Breast epithelium (tissue), 4 donors: ENCODE measurements at regions of chr12 and their contacts with region 1.

Region 1: DNA sequence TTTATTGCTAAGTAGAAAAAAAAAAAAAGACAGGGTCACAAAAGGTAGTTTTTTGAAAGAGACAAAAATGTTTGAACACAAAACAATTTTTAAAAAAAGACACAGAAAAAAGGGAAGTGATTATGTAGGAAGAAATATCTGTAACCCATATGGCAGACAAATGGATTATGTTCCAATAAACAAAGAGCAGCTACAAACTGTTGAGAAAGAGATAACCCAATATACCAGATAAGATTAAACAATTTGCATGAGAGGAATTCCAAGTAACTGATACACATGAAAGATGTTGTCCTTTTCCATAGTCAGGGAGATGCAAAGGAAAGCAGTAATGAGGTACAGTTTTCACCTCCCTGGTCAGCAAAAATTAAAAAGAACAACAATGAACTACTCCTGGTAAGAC is 44.9 kb downstream of the PTPRR start:
- DNase-seq: no peak
- H3K4me3 ChIP-seq: no peak overlapping the region
- H3K27ac ChIP-seq: no peak overlapping the region
- H3K4me1 ChIP-seq: no peaks in the 10 kb centered on the region
- H3K27me3 ChIP-seq: no peaks in the 10 kb centered on the region
- CTCF ChIP-seq: no peak
- POLR2A ChIP-seq: no peak

Region 2: DNA sequence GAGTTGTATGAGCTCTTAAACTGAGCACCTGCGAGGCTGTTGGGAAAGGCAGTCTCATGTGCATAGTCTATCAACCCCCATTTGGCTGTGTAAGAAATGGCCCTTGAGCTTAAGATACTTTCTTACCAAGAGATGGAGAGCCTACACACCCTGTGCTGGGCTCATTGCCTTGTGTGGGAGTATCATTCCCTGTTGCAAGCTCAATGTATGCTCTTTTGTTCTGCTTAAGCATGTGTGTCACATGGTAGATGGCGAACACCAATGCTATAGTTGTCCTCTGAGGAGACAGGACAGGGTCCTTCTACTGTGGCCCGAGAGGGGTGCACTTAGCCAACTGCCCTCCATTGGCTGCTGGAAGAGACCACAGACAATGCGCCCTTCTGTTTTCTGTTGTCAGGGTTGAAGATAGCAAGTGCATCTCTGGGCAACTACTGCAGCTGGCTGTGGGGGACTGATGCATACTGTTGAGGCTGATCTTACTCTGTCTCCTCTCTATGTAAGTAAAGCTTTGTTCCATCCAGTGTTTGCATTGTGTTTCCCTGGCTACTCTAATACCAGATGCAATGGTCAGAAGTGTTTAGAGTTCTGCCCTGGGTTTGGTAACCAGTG is 317.9 kb before region 1 on chr12:
- intact Hi-C with region 1: no loop called
- DNase-seq: no peak
- H3K4me3 ChIP-seq: no peak overlapping the region
- H3K27ac ChIP-seq: no peak overlapping the region
- H3K4me1 ChIP-seq: no peaks in the 10 kb centered on the region
- H3K27me3 ChIP-seq: no peaks in the 10 kb centered on the region
- CTCF ChIP-seq: no peak
- POLR2A ChIP-seq: no peak

Region 3: DNA sequence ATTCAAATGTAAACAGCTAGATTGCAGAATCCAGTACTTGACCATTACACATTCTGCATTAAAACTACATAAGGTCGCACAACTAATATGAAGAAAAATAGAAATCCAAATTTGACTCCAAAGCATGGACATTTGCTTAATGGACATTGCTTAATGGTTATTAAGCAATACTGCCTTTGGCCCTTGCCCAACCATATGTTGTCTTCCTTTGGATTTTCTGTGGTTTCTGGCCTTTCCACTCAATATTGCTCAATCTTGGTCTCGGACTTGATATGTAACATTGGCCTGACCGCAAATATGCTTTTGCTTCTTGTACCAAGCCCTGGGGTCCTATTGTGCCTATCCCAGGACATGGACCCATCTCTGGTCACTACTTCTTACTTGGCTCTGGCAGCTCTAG is 22.3 kb before region 1 on chr12:
- intact Hi-C with region 1: loop called (anchors 2 kb)
- DNase-seq: peak in 1 of 2 donors; percentile 17
- H3K4me3 ChIP-seq: no peak overlapping the region
- H3K27ac ChIP-seq: peak overlapping the region in 1 of 2 donors; percentile 29
- H3K4me1 ChIP-seq: no peaks in the 10 kb centered on the region
- H3K27me3 ChIP-seq: no peaks in the 10 kb centered on the region
- CTCF ChIP-seq: no peak
- POLR2A ChIP-seq: no peak

Region 4: DNA sequence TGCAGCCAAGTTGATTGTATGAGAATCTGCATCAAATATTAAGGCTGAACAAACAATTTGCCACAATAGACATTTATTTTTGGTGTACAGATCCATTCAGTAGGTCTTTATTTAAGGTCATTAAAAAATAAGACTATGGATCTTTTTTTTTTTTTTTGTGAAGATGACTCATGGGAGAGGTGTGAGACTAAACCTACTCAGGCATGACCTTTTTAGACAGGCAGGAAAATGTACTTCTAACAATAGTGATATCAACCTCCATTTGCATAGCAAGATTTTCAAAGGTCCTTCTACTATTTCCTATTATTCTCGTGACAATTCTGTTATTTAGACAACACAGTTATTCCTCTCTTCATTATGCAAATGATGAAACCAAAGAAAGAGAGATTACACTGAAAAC is 84.9 kb after region 1 on chr12:
- intact Hi-C with region 1: no loop called
- DNase-seq: no peak
- H3K4me3 ChIP-seq: no peak overlapping the region
- H3K27ac ChIP-seq: no peak overlapping the region
- H3K4me1 ChIP-seq: no peaks in the 10 kb centered on the region
- H3K27me3 ChIP-seq: no peaks in the 10 kb centered on the region
- CTCF ChIP-seq: no peak
- POLR2A ChIP-seq: no peak